HepG2 (cell line): ENCODE measurements at regions of chr10 and their contacts with region 1.

Region 1: GRCh38 chr10:32125023-32125422 is 68.8 kb upstream of the KIF5B start:
- DNase-seq: peak; percentile 95
- ATAC-seq: peak; percentile 76
- H3K4me3 ChIP-seq: no peak overlapping the region
- H3K27ac ChIP-seq: peak overlapping the region; percentile 43
- H3K4me1 ChIP-seq: peaks cover 77% of the 10 kb centered on the region
- H3K27me3 ChIP-seq: no peaks in the 10 kb centered on the region
- CTCF ChIP-seq: no peak
- EP300 ChIP-seq: peak in 1 of 2 experiments; percentile 86; a peak in 2 of 4 replicates
- POLR2A ChIP-seq: no peak
- RAD21 ChIP-seq: no peak

Region 2: DNA sequence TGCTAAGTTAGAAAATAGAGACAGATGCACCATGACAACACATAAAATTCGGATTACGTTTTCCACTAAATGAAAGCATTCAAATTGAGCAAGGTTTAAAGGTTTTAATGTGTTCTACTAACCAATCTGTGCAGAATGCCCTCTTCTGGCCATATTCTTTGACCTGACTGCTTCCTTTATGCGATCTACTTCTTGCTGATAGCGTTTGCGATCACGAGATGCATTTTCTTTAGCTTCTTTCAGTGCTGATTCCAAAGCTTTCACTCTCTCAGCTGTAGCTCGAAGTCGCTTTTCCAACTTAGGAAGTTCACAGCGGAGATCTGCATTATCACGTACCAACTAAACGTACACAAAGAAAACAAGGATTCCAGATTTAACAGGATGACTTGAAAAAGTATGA is 108.0 kb before region 1 on chr10:
- CTCF ChIA-PET with region 1: no interaction called
- POLR2A ChIA-PET with region 1: no interaction called
- in situ Hi-C with region 1: no loop called
- intact Hi-C with region 1: no loop called
- DNase-seq: no peak
- ATAC-seq: no peak
- H3K4me3 ChIP-seq: no peak overlapping the region
- H3K27ac ChIP-seq: no peak overlapping the region
- H3K4me1 ChIP-seq: no peaks in the 10 kb centered on the region
- H3K27me3 ChIP-seq: no peaks in the 10 kb centered on the region
- CTCF ChIP-seq: no peak
- EP300 ChIP-seq: no peak
- POLR2A ChIP-seq: no peak
- RAD21 ChIP-seq: no peak

Region 3: GRCh38 chr10:32104622-32105509 is 20.2 kb before region 1 on chr10:
- CTCF ChIA-PET with region 1: no interaction called
- POLR2A ChIA-PET with region 1: interaction called, 37 read pairs
- in situ Hi-C with region 1: no loop called
- intact Hi-C with region 1: loop called (anchors 1 kb)
- DNase-seq: peak; percentile 86
- ATAC-seq: peak; percentile 62
- H3K4me3 ChIP-seq: peak overlapping the region; percentile 17 to 58 (median 17); a peak in 3 of 6 replicates
- H3K27ac ChIP-seq: peak overlapping the region; percentile 84
- H3K4me1 ChIP-seq: peaks cover 45% of the 10 kb centered on the region
- H3K27me3 ChIP-seq: no peaks in the 10 kb centered on the region
- CTCF ChIP-seq: no peak
- EP300 ChIP-seq: peak in 1 of 2 experiments; percentile 46; a peak in 2 of 4 replicates
- POLR2A ChIP-seq: no peak
- RAD21 ChIP-seq: no peak